ENCODE measurements at regions of chr4 and their contacts with region 1.

Region 1: DNA sequence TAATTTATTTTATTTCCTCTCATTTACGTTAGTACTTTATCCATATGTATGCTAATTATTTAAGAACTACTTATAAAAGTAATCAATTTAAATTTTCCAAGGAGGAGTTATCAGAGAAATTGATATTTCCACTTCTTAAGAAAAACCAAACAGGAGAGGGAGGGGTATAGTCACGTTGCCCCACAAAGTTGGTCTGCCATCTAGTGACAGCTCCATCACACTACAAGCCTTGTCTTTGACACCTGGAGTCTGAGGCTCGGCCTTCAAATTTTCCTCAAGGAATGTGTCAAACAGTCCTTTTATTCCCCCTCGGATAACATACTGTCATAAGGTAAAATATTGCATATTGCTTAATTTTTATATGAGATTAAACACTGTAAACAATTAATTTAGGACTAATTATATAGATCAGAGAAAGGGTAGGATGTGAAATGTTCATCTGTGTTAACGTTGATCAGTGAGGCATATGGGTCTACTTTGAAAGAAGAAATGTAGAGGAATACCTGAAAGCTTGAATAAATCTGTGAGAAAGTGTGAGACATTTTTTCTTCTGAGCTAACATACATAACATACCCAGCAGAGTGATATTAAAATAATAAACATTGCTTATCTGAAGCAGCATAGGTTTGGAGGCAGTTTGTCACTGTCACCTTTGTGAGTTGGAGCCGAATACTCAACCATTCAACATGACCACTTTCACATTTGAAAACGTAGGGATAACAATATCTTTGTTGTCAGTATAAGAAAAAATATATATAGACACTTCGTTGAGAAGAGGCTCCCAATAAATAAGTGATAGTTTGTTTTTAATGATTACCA is 114.4 kb downstream of the GLRA3 start:
- DNase-seq: peak; percentile 26 to 34
- H3K4me3 ChIP-seq: no peak overlapping the region
- H3K27ac ChIP-seq: no peak overlapping the region
- H3K4me1 ChIP-seq: no peaks in the 10 kb centered on the region
- H3K27me3 ChIP-seq: no peaks in the 10 kb centered on the region
- CTCF ChIP-seq: peak; percentile 73

Region 2: GRCh38 chr4:174522183-174523048 is 192.2 kb before region 1 on chr4 and contains the start of gene HPGD:
- CTCF ChIA-PET with region 1: no interaction called
- POLR2A ChIA-PET with region 1: no interaction called
- intact Hi-C with region 1: loop called (anchors 5 kb)
- DNase-seq: peak in 1 of 2 experiments; percentile 37
- H3K4me3 ChIP-seq: peak within 1 kb of the TSS; percentile 55; the same call in 1 of the 2 replicates
- H3K27ac ChIP-seq: no peak within 1 kb of the TSS
- H3K4me1 ChIP-seq: no peaks in the 10 kb centered on the region
- H3K27me3 ChIP-seq: no peaks in the 10 kb centered on the region
- CTCF ChIP-seq: no peak
- total RNA-seq, gene HPGD: 0.96 and 1.7 TPM in 2 replicates

Region 3: DNA sequence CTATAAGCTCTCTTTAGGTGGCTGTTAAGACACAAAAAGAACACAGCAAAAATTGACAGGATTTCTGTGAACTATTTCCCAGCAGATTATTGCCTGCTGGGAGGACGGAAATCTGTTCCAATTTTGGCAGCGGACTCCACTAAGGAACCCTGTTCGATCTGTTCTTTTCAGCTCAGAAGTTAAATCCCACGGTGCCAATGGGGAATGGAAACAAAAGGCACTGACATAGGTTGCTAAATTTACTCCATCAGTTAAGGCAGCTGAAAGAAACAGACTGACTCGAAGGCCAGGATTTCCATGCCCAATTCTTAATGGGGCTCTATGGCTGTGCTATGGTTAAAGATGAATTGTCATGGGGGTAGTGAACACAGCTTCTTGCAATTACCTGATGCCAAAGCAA is 65.8 kb before region 1 on chr4:
- CTCF ChIA-PET with region 1: no interaction called
- POLR2A ChIA-PET with region 1: no interaction called
- intact Hi-C with region 1: loop called (anchors 10 kb)
- DNase-seq: no peak
- H3K4me3 ChIP-seq: no peak overlapping the region
- H3K27ac ChIP-seq: no peak overlapping the region
- H3K4me1 ChIP-seq: no peaks in the 10 kb centered on the region
- H3K27me3 ChIP-seq: no peaks in the 10 kb centered on the region
- CTCF ChIP-seq: no peak

Region 4: DNA sequence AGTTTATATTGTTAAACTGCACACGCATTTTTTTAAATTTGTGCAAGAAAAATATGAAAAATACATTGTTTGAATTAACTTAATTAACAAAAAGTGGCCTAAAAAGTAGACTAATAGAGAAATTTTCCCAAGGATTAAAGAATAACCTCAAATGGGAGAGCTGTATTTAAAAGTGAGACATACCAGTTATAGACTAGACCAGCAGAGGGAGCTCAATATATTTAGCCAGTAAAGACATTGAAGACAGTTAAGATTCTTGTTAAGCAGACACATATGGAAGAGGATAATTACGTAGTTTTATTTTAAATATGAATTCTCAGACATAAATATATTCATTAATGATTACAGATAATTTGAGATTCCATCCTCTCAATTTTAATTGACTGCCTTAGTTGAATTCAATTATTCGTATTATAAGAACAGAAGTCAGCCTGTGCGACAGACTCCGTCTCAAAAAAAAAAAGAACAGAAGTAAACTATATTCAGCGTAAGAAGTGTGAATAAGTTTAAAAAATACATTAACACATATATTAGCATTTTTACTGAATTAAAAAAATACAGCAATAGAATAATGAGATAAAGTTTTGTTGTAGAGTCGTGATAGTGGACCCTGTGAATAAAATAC is 49.6 kb after region 1 on chr4:
- CTCF ChIA-PET with region 1: no interaction called
- POLR2A ChIA-PET with region 1: no interaction called
- intact Hi-C with region 1: no loop called
- DNase-seq: no peak
- H3K4me3 ChIP-seq: no peak overlapping the region
- H3K27ac ChIP-seq: no peak overlapping the region
- H3K4me1 ChIP-seq: no peaks in the 10 kb centered on the region
- H3K27me3 ChIP-seq: no peaks in the 10 kb centered on the region
- CTCF ChIP-seq: peak; percentile 70